ENCODE measurements at regions of chr15 and their contacts with region 1.

Region 1: GRCh38 chr15:78000091-78000926 is 77.2 kb downstream of the TBC1D2B start:
- DNase-seq: peak; percentile 51 to 62
- H3K4me3 ChIP-seq: no peak overlapping the region
- H3K27ac ChIP-seq: peak overlapping the region in 1 of 2 donors; percentile 20
- H3K4me1 ChIP-seq: peaks cover 4 to 15% of the 10 kb centered on the region in 2 donors
- H3K27me3 ChIP-seq: no peaks in the 10 kb centered on the region
- CTCF ChIP-seq: peak; percentile 16 to 61 (median 48)
- POLR2A ChIP-seq: no peak

Region 2: DNA sequence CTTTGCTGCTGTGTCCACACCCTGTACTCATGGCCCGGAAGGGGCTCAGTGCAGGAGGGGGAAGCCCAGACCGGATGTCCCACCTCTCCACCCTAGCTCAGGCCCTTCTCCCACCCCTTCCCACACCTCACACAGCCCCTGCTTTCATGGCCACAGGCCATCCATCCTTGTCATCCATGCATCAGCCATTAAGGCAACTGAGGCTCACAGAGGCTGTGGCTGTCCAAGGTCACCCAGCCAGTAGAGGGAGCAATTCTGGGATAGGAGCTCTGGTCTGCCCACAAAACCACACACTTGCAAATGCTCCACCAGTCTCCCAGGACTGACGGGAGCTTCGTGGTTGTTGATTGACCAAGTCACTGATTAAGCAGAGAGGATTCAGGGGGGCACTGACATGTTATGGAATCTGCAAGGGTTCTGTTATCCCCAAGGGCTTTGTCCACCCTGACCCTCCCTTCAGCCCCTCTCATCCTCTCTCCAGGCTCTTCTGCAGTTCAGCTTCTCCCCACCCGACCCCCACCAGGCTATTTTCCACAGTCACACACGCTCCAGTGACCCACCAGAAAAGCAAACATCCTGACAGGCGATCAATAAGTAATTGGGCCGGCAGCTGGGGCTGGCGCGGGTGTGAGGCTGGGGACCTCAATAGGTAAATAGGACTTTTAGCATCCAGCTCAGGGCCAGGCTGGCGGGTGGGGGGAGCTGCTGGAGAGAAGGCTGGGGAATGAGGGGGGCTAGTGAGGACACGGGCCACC is 382.7 kb before region 1 on chr15:
- intact Hi-C with region 1: no loop called
- DNase-seq: no peak
- H3K4me3 ChIP-seq: no peak overlapping the region
- H3K27ac ChIP-seq: no peak overlapping the region
- H3K4me1 ChIP-seq: no peaks in the 10 kb centered on the region
- H3K27me3 ChIP-seq: no peaks in the 10 kb centered on the region
- CTCF ChIP-seq: no peak
- POLR2A ChIP-seq: no peak

Region 3: DNA sequence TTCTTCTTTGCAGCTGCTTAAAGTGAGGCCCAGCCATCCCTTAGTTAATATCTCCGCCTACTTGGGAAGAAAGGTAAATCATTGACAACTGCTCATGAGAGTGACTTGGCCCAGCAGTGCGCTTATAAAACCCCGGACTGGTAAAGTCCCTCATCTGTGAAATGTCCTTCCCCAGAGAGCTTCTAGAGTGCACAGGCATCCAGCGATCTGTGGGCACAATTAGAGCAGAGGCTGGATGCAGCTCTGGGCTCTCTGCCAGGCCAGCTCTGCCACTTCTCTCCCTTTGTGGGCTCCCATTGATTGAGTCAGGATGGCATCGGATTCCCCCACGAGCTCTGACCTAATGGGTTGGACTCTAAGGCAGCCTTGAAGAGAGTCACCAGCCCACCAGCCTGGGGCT is 148.6 kb before region 1 on chr15:
- intact Hi-C with region 1: no loop called
- DNase-seq: no peak
- H3K4me3 ChIP-seq: no peak overlapping the region
- H3K27ac ChIP-seq: no peak overlapping the region
- H3K4me1 ChIP-seq: no peaks in the 10 kb centered on the region
- H3K27me3 ChIP-seq: no peaks in the 10 kb centered on the region
- CTCF ChIP-seq: no peak
- POLR2A ChIP-seq: no peak

Region 4: DNA sequence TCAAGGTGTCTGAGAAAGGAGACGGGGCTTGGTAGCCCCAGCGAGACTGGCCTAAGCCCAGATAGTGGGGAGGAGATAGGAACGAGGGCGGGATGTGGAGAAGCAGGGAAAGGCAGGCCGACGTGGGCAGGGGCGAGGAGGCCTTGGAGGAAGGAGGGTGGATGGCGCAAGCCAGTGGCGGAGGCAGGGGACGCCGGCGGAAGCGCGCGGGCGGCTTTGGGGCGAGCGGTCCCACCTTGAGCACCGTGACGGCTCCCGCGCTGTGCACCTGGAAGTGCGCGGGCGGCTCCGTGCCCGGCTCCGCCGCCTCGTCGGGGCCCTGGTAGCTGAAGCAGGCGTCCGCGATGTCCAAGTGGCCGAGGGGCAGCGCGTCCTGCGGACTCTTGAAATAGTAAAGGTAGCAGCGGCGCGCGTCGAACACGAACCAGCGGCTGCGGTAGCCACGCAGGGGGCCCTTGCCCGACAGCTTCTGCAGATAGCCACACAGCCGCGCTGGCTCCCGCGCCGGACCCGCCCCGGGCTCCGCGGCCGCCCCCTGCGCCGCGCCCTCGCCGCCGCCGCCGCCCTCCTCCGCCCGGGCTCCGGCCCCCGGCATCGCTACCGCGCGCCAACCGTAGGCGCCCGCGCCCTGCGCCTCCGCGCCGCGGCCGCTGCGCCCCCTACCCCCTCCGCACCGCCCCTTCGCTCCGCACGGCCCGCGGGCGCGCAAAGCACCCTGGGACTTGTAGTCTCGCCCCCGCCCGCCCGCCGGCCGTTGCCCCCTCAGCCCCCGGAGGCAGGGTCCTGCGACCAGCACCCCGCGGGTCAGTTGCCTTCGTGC is 77.0 kb after region 1 on chr15 and contains the start of gene TBC1D2B:
- intact Hi-C with region 1: loop called (anchors 10 kb)
- DNase-seq: peak; percentile 58 to 69
- H3K4me3 ChIP-seq: peak within 1 kb of the TSS; percentile 41 to 96
- H3K27ac ChIP-seq: peak within 1 kb of the TSS; percentile 88 to 95
- H3K4me1 ChIP-seq: peaks cover 0 to 2% of the 10 kb centered on the region in 2 donors
- H3K27me3 ChIP-seq: no peaks in the 10 kb centered on the region
- CTCF ChIP-seq: peak in 3 of 4 experiments; percentile 21 to 33 (median 27)
- POLR2A ChIP-seq: peak in 1 of 2 donors; percentile 35
- total RNA-seq, gene TBC1D2B: 27.7 to 89.0 (median 57.9) TPM

Measured in uterus (tissue), 4 donors.